ENCODE measurements at regions of chr3 and their contacts with region 1.

Region 1: GRCh38 chr3:196969660-196970546 is 1.3 kb upstream of the PIGZ start:
- DNase-seq: peak; percentile 33
- H3K4me3 ChIP-seq: peak overlapping the region; percentile 68 to 72 (median 70)
- H3K27ac ChIP-seq: no peak overlapping the region
- H3K4me1 ChIP-seq: peaks cover 16% of the 10 kb centered on the region
- H3K27me3 ChIP-seq: no peaks in the 10 kb centered on the region
- CTCF ChIP-seq: peak; percentile 50 to 52

Region 2: GRCh38 chr3:196537319-196537984 is 432.5 kb before region 1 on chr3:
- CTCF ChIA-PET with region 1: no interaction called
- dilution Hi-C with region 1: no loop called
- in situ Hi-C with region 1: no loop called
- intact Hi-C with region 1: loop called (anchors 2 kb)
- DNase-seq: peak; percentile 37
- H3K4me3 ChIP-seq: no peak overlapping the region
- H3K27ac ChIP-seq: no peak overlapping the region
- H3K4me1 ChIP-seq: no peaks in the 10 kb centered on the region
- H3K27me3 ChIP-seq: no peaks in the 10 kb centered on the region
- CTCF ChIP-seq: peak; percentile 55 to 67

Region 3: DNA sequence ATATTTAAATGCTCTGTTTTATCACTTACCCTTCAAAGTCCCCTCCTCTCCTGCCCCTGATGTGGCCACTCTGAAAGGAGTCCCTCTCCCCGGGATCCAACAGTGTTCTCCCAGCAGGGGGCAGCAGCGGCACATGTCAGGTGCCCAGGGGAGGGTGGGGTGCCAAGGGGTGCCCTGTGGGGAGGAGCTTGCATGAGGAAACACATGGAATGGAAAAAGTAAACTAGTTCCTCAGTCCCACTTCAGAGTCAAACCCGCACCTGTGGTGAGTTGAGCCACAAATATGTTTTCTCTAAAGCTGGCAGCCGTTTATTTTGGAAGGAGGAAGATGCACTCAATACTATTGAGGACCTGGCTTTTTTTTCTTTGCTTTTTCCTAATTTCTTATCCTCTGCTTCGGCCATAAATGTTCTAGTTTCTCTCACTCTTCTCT is 360.5 kb before region 1 on chr3:
- CTCF ChIA-PET with region 1: no interaction called
- dilution Hi-C with region 1: no loop called
- in situ Hi-C with region 1: no loop called
- intact Hi-C with region 1: loop called (anchors 1 kb)
- DNase-seq: peak; percentile 62
- H3K4me3 ChIP-seq: no peak overlapping the region
- H3K27ac ChIP-seq: no peak overlapping the region
- H3K4me1 ChIP-seq: peaks cover 8% of the 10 kb centered on the region
- H3K27me3 ChIP-seq: no peaks in the 10 kb centered on the region
- CTCF ChIP-seq: peak; percentile 57 to 95

Region 4: DNA sequence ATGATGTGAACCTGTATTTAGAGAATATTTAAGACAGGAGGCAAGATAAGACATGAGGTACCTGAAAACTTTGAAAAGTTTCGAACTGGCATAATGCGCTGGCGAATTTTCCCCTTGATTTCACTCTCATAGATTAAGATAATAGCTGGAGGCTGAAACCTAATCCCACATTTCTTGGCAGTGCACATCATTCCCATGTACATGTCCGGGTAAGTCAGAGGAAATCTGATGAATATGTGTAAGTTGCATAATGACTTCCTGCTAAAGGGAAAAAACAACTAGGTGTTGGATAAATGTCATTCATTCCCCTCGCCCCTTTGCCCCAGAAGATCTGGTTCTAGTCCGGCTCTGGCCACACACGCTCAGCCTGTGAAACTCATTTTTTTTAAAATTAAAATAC is 261.4 kb before region 1 on chr3:
- CTCF ChIA-PET with region 1: no interaction called
- dilution Hi-C with region 1: no loop called
- in situ Hi-C with region 1: no loop called
- intact Hi-C with region 1: no loop called
- DNase-seq: no peak
- H3K4me3 ChIP-seq: no peak overlapping the region
- H3K27ac ChIP-seq: no peak overlapping the region
- H3K4me1 ChIP-seq: peaks cover 4% of the 10 kb centered on the region
- H3K27me3 ChIP-seq: no peaks in the 10 kb centered on the region
- CTCF ChIP-seq: no peak

Region 5: GRCh38 chr3:196837819-196838420 is 132.0 kb before region 1 on chr3:
- CTCF ChIA-PET with region 1: no interaction called
- dilution Hi-C with region 1: no loop called
- in situ Hi-C with region 1: no loop called
- intact Hi-C with region 1: loop called (anchors 1 kb)
- DNase-seq: peak; percentile 36
- H3K4me3 ChIP-seq: no peak overlapping the region
- H3K27ac ChIP-seq: no peak overlapping the region
- H3K4me1 ChIP-seq: no peaks in the 10 kb centered on the region
- H3K27me3 ChIP-seq: no peaks in the 10 kb centered on the region
- CTCF ChIP-seq: peak; percentile 85 to 89

Region 6: DNA sequence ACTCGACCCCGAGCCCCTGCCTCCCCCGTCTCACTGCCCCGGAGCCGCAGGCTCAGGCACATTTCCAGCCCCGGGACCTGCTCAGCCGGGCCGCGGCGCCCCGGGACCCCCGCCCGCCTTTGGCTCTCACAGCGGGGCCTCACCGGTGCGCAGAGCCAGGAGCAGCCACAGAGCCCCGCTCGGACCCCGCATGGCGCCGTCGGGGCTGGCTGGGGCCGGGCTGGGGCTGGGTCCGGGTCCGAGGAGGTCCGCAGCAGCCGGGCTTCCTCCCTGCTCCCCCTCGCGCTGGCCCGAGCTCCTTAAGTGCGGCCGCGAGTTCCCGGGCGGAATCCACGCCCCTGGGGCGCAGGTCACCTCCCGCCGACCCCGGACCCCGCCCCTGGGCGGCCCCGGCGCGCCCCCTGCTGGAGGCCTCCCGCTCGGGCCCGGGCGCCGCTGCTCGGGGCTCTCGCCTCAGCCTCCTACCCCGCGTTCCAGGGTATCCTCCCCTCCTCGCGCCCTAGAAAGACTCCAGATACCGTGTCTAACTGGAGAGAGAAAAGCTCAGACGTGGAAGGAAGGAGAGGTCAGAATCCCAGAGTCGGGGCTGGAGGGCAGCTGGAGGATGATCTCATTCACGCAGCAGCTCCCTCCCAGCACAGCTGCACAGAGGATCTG is 59.7 kb after region 1 on chr3 and contains the start of gene MELTF:
- CTCF ChIA-PET with region 1: no interaction called
- dilution Hi-C with region 1: no loop called
- in situ Hi-C with region 1: no loop called
- intact Hi-C with region 1: loop called (anchors 2 kb)
- DNase-seq: no peak
- H3K4me3 ChIP-seq: peak within 1 kb of the TSS; percentile 26 to 43 (median 42)
- H3K27ac ChIP-seq: no peak within 1 kb of the TSS
- H3K4me1 ChIP-seq: peaks cover 32% of the 10 kb centered on the region
- H3K27me3 ChIP-seq: no peaks in the 10 kb centered on the region
- CTCF ChIP-seq: peak; percentile 34 to 59
- total RNA-seq, gene MELTF: 5.8 to 11.7 TPM

Region 7: GRCh38 chr3:197076415-197076814 is 106.5 kb after region 1 on chr3:
- CTCF ChIA-PET with region 1: no interaction called
- dilution Hi-C with region 1: no loop called
- in situ Hi-C with region 1: no loop called
- intact Hi-C with region 1: no loop called
- DNase-seq: no peak
- H3K4me3 ChIP-seq: no peak overlapping the region
- H3K27ac ChIP-seq: no peak overlapping the region
- H3K4me1 ChIP-seq: no peaks in the 10 kb centered on the region
- H3K27me3 ChIP-seq: no peaks in the 10 kb centered on the region
- CTCF ChIP-seq: no peak